Testis (tissue), 5 donors: ENCODE measurements at regions of chr3 and their contacts with region 1.

Region 1: DNA sequence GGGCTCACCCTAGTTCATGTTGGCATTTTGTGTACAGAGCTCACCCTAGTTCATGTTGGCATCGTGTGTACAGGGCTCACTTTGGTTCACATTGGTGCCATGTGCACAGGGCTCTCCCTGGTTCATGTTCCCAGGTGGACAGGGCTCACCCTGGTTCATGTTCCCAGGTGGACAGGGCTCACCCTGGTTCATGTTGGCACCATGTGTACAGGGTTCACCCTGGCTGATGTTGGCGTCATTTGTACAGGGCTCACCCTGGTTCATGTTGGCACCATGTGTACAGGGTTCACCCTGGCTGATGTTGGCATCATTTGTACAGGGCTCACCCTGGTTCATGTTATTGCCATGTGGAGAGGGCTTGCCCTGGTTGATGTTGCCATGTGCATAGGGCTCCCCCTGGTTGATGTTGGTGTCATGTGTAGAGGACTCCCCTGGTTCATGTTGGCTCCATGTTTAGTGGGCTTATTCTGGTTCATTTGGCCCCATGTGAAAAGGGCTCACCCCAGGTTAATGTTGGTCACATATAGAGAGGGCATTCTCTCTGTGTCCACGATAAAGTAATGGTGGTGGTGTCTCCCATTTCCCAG is 31.7 kb upstream of the NR2C2 start:
- DNase-seq: peak; percentile 14
- H3K4me3 ChIP-seq: no peak overlapping the region
- H3K27ac ChIP-seq: no peak overlapping the region
- H3K4me1 ChIP-seq: no peaks in the 10 kb centered on the region
- H3K27me3 ChIP-seq: no peaks in the 10 kb centered on the region
- CTCF ChIP-seq: peak in 1 of 3 experiments; percentile 10
- POLR2A ChIP-seq: no peak

Region 2: GRCh38 chr3:14565868-14566588 is 349.7 kb before region 1 on chr3:
- intact Hi-C with region 1: no loop called
- DNase-seq: no peak
- H3K4me3 ChIP-seq: no peak overlapping the region
- H3K27ac ChIP-seq: no peak overlapping the region
- H3K4me1 ChIP-seq: no peaks in the 10 kb centered on the region
- H3K27me3 ChIP-seq: no peaks in the 10 kb centered on the region
- CTCF ChIP-seq: no peak
- POLR2A ChIP-seq: no peak

Region 3: GRCh38 chr3:14672588-14672987 is 243.1 kb before region 1 on chr3:
- intact Hi-C with region 1: loop called (anchors 5 kb)
- DNase-seq: no peak
- H3K4me3 ChIP-seq: no peak overlapping the region
- H3K27ac ChIP-seq: no peak overlapping the region
- H3K4me1 ChIP-seq: no peaks in the 10 kb centered on the region
- H3K27me3 ChIP-seq: no peaks in the 10 kb centered on the region
- CTCF ChIP-seq: no peak
- POLR2A ChIP-seq: no peak

Region 4: DNA sequence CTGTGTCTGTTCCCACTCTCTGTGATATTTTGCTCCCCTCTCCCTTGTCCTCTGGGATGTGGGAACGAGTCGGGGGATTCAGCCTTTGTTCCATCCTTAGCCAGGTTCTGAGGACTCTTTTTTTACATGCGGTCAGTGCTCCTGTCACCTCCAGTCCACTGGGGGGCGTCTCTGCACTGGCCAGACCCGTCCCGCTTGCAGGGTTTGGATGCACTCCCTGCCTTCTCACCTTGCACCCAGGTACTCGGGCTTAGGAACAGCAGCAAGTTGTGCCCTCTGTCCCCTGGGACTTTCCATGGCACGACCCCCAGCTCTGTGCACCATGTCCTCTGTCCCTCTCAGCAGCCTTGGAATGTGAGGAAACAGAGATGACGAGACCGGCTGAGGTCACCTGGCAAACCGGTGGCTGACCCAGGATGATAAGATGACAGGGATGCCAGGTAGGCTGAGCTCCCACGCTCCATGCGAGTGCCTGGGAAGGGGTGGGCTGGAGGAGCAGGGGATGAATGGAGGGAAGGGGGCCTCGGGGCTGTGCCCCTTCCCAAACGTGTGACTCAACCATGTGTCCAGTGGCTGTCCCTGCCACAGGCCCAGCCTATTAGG is 124.3 kb before region 1 on chr3:
- intact Hi-C with region 1: loop called (anchors 10 kb)
- DNase-seq: peak; percentile 82
- H3K4me3 ChIP-seq: no peak overlapping the region
- H3K27ac ChIP-seq: no peak overlapping the region
- H3K4me1 ChIP-seq: no peaks in the 10 kb centered on the region
- H3K27me3 ChIP-seq: no peaks in the 10 kb centered on the region
- CTCF ChIP-seq: peak; percentile 37 to 71 (median 63)
- POLR2A ChIP-seq: no peak